Activated naive CD4-positive, alpha-beta T cell treated with anti-CD3 and anti-CD28 coated beads for 36 hours (primary cell): ENCODE measurements at regions of chr1 and their contacts with region 1.

Region 1: DNA sequence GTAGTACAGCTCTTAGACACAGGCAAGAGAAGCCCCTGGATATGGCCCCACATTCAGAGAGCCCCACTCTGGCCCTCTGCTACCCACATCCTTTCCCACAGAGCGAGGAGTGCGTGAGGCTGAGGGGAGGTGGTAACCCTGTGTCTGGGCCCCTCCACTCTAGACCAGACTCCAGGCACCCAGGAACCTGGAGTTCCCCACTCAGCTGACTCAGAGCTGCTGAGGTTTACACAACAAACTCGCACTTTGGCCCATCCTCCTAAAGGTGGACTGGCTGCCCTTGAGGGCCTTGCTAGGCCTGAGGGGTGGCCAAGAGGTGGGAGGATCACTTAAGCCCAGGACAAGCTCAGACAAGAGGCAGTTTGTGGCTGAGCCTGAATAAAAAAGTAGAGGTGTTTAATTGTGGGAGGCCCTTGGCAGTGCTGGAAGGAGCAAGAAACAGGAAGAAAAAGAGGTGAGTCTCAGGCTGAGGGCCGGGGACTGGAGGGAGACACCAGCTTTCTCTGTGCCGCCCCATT is 10.7 kb downstream of the MR1 start:
- DNase-seq: peak; percentile 80
- H3K4me3 Mint-ChIP-seq: no peak overlapping the region
- H3K27ac Mint-ChIP-seq: peak overlapping the region; percentile 64
- H3K4me1 Mint-ChIP-seq: peaks cover 36% of the 10 kb centered on the region
- H3K27me3 Mint-ChIP-seq: no peaks in the 10 kb centered on the region

Region 2: DNA sequence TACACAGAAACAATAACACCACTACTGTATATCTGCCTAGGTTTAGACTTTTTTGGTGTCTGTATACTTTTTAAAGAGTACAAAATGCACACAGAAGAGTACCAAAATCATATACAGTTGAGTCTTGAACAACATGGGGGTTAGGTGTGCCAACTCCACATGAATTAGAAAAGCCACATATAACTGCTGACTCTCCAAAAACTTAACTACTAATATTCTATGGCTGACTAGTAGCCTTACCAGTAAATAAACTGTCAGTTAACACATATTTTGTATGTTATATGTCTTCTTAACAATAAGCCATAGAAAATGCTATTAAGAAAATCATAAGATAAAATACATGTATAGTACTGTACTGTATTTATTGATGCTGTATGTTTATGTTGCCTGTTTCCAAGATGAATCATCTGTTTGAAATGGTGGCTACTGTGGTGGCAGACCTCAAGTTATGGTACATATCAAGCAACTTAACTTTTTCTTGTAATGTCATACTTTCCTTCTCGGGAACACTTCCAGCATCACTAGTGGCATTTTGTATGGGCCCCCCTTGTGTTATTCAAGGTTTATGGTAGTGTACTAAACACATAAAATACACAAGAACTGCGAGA is 743.3 kb before region 1 on chr1:
- CTCF ChIA-PET with region 1: no interaction called
- intact Hi-C with region 1: no loop called
- DNase-seq: no peak
- H3K4me3 Mint-ChIP-seq: no peak overlapping the region
- H3K27ac Mint-ChIP-seq: no peak overlapping the region
- H3K4me1 Mint-ChIP-seq: peaks cover 13% of the 10 kb centered on the region
- H3K27me3 Mint-ChIP-seq: no peaks in the 10 kb centered on the region

Region 3: DNA sequence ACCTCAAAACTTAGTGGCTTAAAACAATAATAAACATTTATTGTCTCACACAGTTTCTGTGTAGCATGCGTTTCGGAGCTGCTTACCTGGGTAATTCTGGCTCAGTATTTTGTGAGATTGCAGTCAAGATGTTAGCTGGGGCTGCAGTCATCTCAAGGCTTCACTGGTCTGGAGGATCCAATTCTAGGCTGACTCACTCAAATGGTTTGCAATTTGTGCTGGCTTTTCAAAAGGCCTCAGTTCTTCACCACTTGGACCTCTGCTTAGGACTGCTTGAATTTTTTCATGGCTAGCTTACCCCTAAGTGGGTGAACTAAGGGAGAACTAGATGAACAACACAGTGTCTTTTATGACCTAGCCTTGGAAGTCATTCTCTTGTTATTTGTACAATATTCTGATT is 391.7 kb before region 1 on chr1:
- CTCF ChIA-PET with region 1: no interaction called
- intact Hi-C with region 1: no loop called
- DNase-seq: no peak
- H3K4me3 Mint-ChIP-seq: no peak overlapping the region
- H3K27ac Mint-ChIP-seq: no peak overlapping the region
- H3K4me1 Mint-ChIP-seq: peaks cover 6% of the 10 kb centered on the region
- H3K27me3 Mint-ChIP-seq: no peaks in the 10 kb centered on the region

Region 4: GRCh38 chr1:181099152-181100014 is 54.9 kb after region 1 on chr1:
- CTCF ChIA-PET with region 1: no interaction called
- intact Hi-C with region 1: loop called (anchors 2 kb)
- DNase-seq: peak; percentile 80
- H3K4me3 Mint-ChIP-seq: peak overlapping the region; percentile 67
- H3K27ac Mint-ChIP-seq: peak overlapping the region; percentile 99
- H3K4me1 Mint-ChIP-seq: peaks cover 88% of the 10 kb centered on the region
- H3K27me3 Mint-ChIP-seq: no peaks in the 10 kb centered on the region